Posterior cingulate gyrus (tissue), 11 donors: ENCODE measurements at regions of chr15 and their contacts with region 1.

Region 1: DNA sequence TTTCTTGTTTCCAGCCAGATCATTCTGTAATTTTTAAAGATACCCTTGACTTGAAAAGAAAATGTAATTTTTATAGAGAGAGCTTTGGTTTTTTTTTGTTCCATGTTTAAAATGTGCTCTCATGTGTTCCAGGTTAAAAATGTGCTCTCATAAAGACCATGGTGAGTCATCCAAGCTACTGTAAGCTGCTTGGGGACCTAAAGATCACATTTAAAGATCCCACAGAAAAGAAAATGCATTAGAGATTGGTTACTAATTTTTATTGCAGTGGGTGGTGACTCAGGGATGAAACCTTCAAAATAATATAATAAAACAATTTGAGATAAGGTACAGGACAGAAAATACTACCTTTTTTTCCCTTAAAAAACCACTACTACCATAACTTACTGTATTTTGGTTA is 11.0 kb downstream of the TCF12 start:
- DNase-seq: no peak

Region 2: GRCh38 chr15:56798639-56799038 is 130.8 kb before region 1 on chr15:
- intact Hi-C with region 1: no loop called
- DNase-seq: no peak

Region 3: DNA sequence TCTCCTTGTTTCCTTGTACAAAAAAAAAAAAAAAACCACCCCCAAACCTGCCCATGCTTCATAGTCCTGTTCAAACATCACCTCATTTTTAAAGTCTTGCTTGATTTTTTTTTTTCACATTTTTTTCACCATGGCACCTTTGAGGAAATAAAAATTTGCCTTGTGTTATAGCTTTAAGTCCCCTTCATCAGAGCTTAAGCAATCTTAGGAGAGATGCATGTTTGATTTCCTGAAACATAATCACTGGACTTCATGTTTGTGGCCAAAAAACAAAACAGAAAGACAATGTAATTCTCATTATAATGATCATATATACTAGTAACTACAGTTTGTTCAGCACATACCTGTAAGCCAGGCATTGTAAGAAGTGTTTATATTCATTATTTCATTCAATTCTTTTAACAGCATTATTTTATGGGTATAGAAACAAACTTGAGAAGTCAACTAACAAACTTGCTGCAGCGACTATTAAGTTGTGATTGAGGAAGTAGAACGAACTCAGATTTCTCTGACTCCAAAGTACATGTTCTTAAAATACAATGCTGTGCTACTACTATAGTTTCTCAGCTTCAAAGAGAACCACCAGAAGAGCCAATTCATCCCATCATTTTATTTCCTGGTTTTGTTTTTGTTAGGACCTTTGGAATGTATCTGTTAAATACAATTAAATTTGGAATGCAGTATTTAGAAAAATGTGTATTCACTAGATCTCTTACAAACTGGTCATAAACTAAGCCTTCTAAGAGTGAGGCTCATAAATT is 192.9 kb after region 1 on chr15:
- intact Hi-C with region 1: loop called (anchors 5 kb)
- DNase-seq: no peak

Region 4: DNA sequence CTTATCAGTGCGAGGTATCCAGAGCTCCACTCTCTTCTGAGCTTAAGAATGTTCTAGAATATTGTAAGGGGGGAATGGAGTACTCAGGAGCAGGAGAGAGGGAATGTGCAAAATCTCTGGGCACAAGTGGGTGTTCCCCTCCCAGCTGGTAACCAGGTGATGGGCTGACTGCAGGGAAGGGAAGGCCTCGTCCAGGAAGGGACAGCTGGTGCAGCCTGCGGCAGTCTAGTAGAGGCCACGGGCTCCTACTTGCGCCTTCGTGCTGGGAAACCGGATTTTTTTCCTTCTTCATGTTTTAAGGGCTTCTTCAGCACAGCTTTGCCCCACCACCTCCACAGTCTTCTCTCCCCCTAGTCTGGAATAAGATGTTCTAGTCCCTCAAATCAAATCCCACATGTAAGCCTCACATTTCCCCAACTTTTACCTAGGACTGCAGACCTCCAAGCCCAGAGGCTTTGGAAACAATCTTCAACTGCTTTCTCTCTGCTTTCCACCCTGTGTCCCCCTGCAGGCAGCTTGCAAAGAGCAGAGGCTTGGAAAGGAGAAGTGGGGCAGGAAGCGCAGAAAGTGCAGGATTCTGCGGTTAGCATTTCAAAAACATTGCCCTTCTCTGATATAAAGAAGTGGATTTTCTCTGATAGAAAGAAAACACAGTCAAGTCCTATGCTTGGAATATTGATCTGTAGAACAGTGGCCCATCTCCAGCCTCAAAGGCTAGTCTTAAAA is 435.0 kb after region 1 on chr15:
- intact Hi-C with region 1: no loop called
- DNase-seq: no peak